SK-N-SH (cell line): ENCODE measurements at regions of chr20 and their contacts with region 1.

Region 1: GRCh38 chr20:24934101-24934661 is 14.9 kb upstream of the CST7 start:
- DNase-seq: no peak
- H3K4me3 ChIP-seq: no peak overlapping the region
- H3K27ac ChIP-seq: no peak overlapping the region
- H3K4me1 ChIP-seq: no peaks in the 10 kb centered on the region
- H3K27me3 ChIP-seq: no peaks in the 10 kb centered on the region
- CTCF ChIP-seq: no peak
- EP300 ChIP-seq: no peak
- RAD21 ChIP-seq: no peak

Region 2: GRCh38 chr20:24917797-24918578 is 16.2 kb before region 1 on chr20:
- CTCF ChIA-PET with region 1: interaction called, 13 read pairs
- POLR2A ChIA-PET with region 1: no interaction called
- DNase-seq: peak; percentile 85
- H3K4me3 ChIP-seq: no peak overlapping the region; a peak in 1 of 4 replicates
- H3K27ac ChIP-seq: no peak overlapping the region
- H3K4me1 ChIP-seq: no peaks in the 10 kb centered on the region
- H3K27me3 ChIP-seq: no peaks in the 10 kb centered on the region
- CTCF ChIP-seq: peak; percentile 87
- EP300 ChIP-seq: no peak
- RAD21 ChIP-seq: peak; percentile 92